ENCODE measurements at regions of chr2 and their contacts with region 1.

Region 1: DNA sequence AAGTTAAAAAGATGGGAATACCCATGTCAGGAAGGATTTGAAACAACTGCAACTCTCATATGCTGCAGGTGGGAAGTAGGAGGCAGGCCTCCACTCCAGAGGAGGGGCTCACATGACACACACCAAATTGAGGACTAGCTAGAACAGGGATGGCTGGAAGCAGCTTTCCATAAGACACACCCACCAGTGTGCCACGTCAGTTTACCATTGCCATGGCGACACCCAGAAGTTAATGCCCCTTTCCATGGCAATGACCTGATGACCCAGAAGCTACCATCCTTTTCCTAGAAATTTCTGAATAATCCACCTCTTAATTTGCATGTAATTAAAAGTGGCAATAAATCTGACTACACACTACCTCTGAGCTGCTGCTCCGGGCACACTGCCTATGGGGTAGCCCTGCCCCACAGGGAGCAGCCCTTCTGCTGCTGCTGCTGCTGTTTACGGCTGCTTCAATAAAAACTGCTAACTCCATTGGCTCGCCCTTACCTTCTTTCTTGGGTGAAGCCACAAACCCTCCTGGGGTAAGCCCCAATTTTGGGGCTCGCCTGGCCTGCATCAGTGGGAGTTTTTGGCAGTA is 89.4 kb downstream of the RRM2 start:
- DNase-seq: no peak
- H3K4me3 ChIP-seq: no peak overlapping the region
- H3K27ac ChIP-seq: no peak overlapping the region
- H3K4me1 ChIP-seq: no peaks in the 10 kb centered on the region
- H3K27me3 ChIP-seq: no peaks in the 10 kb centered on the region
- CTCF ChIP-seq: no peak
- POLR2A ChIP-seq: no peak

Region 2: DNA sequence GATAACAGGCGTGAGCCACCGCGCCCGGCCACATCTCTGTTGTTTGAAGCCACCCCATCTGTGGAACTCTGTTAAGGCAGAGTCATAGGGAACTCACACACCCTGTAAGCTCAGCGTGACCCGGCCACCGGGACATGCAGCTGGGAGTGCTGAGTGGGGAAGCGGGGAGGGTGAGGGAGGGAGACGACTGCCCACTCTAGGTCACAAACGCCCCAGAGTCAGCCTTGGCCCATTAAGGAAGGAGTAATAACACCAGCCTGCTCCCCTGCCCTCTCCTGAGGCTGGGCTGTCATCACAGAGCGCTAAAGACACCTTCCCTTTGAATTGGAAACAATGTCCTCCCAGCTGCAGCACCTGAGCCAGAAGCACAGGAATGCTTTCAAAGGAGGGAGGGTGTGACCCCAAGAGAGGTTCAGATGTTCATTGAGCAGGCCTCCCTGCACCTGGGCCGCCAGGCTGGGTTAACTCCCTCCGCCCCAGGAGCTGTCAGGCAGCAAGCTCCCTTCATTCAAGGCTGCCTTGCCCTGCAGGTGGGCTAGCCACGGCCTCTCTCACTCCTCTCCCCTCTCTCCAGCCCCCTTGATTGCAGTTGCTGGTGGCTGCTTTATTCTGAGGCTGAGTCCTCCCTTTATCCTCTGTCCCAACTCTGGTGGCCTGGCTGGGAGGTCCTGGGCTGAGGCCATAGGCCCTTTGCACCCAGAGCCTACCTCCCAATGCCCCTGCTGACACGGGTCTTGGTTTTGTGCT is 13.5 kb after region 1 on chr2:
- CTCF ChIA-PET with region 1: interaction called, 3 read pairs
- POLR2A ChIA-PET with region 1: no interaction called
- dilution Hi-C with region 1: no loop called
- intact Hi-C with region 1: loop called (anchors 2 kb)
- DNase-seq: no peak
- H3K4me3 ChIP-seq: no peak overlapping the region
- H3K27ac ChIP-seq: no peak overlapping the region
- H3K4me1 ChIP-seq: no peaks in the 10 kb centered on the region
- H3K27me3 ChIP-seq: no peaks in the 10 kb centered on the region
- CTCF ChIP-seq: no peak
- POLR2A ChIP-seq: no peak